Activated CD4-positive, alpha-beta memory T cell treated with anti-CD3 and anti-CD28 coated beads, Interleukin-2, amount 10 ng/mL, durations not matched to agents 7 days and 5 days (primary cell): ENCODE measurements at regions of chr1 and their contacts with region 1.

Region 1: GRCh38 chr1:27556781-27557595 is 47.0 kb downstream of the AHDC1 start:
- DNase-seq: peak; percentile 79
- H3K4me3 Mint-ChIP-seq: peak overlapping the region; percentile 34
- H3K27ac Mint-ChIP-seq: peak overlapping the region; percentile 82
- H3K4me1 Mint-ChIP-seq: peaks cover 34% of the 10 kb centered on the region
- H3K27me3 Mint-ChIP-seq: no peaks in the 10 kb centered on the region

Region 2: GRCh38 chr1:27436204-27437159 is 120.5 kb before region 1 on chr1:
- CTCF ChIA-PET with region 1: interaction called, 11 read pairs
- POLR2A ChIA-PET with region 1: no interaction called
- DNase-seq: no peak
- H3K4me3 Mint-ChIP-seq: peak overlapping the region; percentile 47
- H3K27ac Mint-ChIP-seq: peak overlapping the region; percentile 69
- H3K4me1 Mint-ChIP-seq: peaks cover 59% of the 10 kb centered on the region
- H3K27me3 Mint-ChIP-seq: no peaks in the 10 kb centered on the region

Region 3: DNA sequence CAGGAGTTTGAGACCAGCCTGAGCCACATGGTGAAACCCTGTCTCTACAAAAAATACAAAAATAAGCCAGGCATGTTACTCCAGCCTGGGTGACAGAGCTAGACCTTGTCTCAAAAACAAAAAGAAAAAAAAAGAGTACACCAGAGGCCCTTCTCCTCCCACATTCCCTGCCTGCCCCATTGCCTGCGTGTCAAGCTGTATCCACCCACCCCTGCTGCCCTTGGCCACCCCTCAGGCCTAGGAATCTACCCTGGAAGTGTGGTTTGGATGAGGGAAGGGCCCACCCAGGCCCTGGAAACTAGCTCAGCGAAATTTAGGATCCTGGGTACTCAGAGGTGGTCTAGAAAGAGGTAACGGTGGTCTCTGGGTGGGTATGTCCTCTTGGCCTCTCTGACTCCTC is 41.4 kb before region 1 on chr1:
- CTCF ChIA-PET with region 1: no interaction called
- POLR2A ChIA-PET with region 1: no interaction called
- DNase-seq: no peak
- H3K4me3 Mint-ChIP-seq: no peak overlapping the region
- H3K27ac Mint-ChIP-seq: no peak overlapping the region
- H3K4me1 Mint-ChIP-seq: peaks cover 15% of the 10 kb centered on the region
- H3K27me3 Mint-ChIP-seq: no peaks in the 10 kb centered on the region

Region 4: GRCh38 chr1:27545271-27545670 is 11.7 kb before region 1 on chr1:
- CTCF ChIA-PET with region 1: interaction called, 10 read pairs
- POLR2A ChIA-PET with region 1: interaction called, 8 read pairs
- DNase-seq: no peak
- H3K4me3 Mint-ChIP-seq: no peak overlapping the region
- H3K27ac Mint-ChIP-seq: no peak overlapping the region
- H3K4me1 Mint-ChIP-seq: peaks cover 10% of the 10 kb centered on the region
- H3K27me3 Mint-ChIP-seq: no peaks in the 10 kb centered on the region

Region 5: GRCh38 chr1:27574871-27575831 is 18.2 kb after region 1 on chr1:
- CTCF ChIA-PET with region 1: interaction called, 82 read pairs
- POLR2A ChIA-PET with region 1: interaction called, 3 read pairs
- DNase-seq: no peak
- H3K4me3 Mint-ChIP-seq: no peak overlapping the region
- H3K27ac Mint-ChIP-seq: no peak overlapping the region
- H3K4me1 Mint-ChIP-seq: peaks cover 10% of the 10 kb centered on the region
- H3K27me3 Mint-ChIP-seq: peaks cover 21% of the 10 kb centered on the region

Region 6: GRCh38 chr1:27618341-27619082 is 61.5 kb after region 1 on chr1:
- CTCF ChIA-PET with region 1: interaction called, 10 read pairs
- POLR2A ChIA-PET with region 1: no interaction called
- DNase-seq: peak; percentile 73
- H3K4me3 Mint-ChIP-seq: no peak overlapping the region
- H3K27ac Mint-ChIP-seq: peak overlapping the region; percentile 82
- H3K4me1 Mint-ChIP-seq: peaks cover 50% of the 10 kb centered on the region
- H3K27me3 Mint-ChIP-seq: no peaks in the 10 kb centered on the region

Region 7: GRCh38 chr1:27671964-27672749 is 115.2 kb after region 1 on chr1 and contains the start of gene IFI6:
- CTCF ChIA-PET with region 1: interaction called, 13 read pairs
- POLR2A ChIA-PET with region 1: interaction called, 7 read pairs
- DNase-seq: peak; percentile 86
- H3K4me3 Mint-ChIP-seq: peak within 1 kb of the TSS; percentile 94
- H3K27ac Mint-ChIP-seq: peak within 1 kb of the TSS; percentile 94
- H3K4me1 Mint-ChIP-seq: peaks cover 42% of the 10 kb centered on the region
- H3K27me3 Mint-ChIP-seq: no peaks in the 10 kb centered on the region
- total RNA-seq, gene IFI6: 577 to 593 TPM

Region 8: DNA sequence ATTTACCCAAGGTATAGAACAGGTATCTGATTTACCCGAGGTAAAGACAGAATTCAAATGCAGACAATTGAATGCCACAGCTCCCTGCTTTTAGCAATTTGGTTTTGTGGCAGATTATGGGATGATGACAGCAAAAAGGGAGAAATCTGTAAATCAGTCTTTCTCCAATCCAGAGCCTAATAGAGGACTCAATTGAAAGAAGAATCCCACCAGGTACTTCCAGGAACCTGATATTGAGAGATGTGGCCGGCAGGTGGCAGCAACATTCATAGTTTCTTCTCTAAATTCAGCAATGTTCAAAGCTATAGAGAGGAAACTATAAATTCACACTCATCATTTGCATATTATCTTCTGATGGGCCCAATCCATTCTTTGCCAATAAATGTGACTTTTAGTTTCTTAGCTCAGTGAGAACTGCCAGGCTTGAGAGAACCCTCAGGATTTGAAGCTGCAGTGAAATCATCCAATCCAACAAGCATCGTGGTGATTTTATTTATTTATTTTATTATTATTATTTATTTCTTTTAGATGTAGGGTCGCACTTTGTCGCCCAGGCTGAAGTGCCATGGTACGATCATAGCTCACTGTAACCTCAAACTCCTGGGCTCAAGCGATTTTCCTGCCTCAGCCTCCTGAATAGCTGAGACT is 802.7 kb after region 1 on chr1:
- CTCF ChIA-PET with region 1: no interaction called
- POLR2A ChIA-PET with region 1: no interaction called
- DNase-seq: peak; percentile 79
- H3K4me3 Mint-ChIP-seq: no peak overlapping the region
- H3K27ac Mint-ChIP-seq: no peak overlapping the region
- H3K4me1 Mint-ChIP-seq: peaks cover 7% of the 10 kb centered on the region
- H3K27me3 Mint-ChIP-seq: peaks cover 6% of the 10 kb centered on the region